CD8-positive, alpha-beta T cell (primary cell): ENCODE measurements at regions of chr3 and their contacts with region 1.

Region 1: DNA sequence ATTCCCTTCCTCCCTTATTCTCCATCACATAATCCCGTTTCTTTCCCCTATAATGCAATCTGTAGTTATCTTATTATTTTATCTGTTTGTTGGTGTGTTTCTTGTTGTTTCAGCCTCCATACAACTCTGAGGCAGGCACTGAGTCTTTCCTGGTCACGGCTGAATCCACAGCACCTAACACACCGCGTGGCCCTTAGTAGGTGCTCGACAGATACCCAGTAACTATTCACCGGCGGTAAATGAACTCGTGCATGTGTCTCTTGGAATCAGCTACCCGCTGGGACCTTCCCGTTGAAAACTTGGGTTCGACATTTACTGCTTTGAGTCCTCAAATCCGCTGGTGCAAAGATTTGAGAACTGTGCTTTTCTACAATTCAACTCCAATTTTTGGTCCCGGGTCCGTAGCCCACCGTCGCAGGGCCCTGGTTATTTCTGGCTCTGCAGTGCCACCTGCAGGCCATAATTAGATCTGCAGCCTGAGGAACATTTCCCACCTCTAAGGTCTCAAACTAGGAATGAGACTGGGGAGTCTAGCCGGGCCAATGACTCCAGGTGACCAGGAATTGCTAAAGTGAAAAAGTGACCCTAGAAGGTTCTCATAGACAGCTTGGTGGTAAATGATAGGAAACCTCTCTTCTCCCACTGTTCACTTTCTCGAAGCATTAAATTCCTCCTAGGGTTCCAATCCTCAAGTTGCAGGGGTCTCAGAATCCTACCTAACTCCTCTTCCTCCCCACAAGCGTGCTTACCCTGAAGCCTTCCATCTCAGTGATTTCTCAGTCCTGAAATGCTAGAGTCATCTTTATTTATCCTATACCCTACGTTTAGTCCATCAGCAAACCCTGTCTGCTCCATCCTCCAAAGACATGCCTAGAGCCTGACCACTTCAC is 40.0 kb upstream of the TRH start:
- DNase-seq: peak in 8 of 9 experiments; percentile 5 to 63 (median 40)
- ATAC-seq: peak; percentile 62
- H3K4me3 ChIP-seq: no peak overlapping the region
- H3K4me3 Mint-ChIP-seq: no peak overlapping the region
- H3K27ac ChIP-seq: no peak overlapping the region
- H3K27ac Mint-ChIP-seq: no peak overlapping the region
- H3K4me1 ChIP-seq: no peaks in the 10 kb centered on the region
- H3K4me1 Mint-ChIP-seq: peaks cover 8% of the 10 kb centered on the region
- H3K27me3 ChIP-seq: no peaks in the 10 kb centered on the region
- H3K27me3 Mint-ChIP-seq: peaks cover 3% of the 10 kb centered on the region
- CTCF ChIP-seq: peak; percentile 85

Region 2: GRCh38 chr3:129383292-129383860 is 551.1 kb before region 1 on chr3:
- CTCF ChIA-PET with region 1: interaction called, 3 read pairs
- POLR2A ChIA-PET with region 1: no interaction called
- intact Hi-C with region 1: loop called in 1 of 2 experiments (anchors 2 kb)
- DNase-seq: peak; percentile 18 to 66 (median 49)
- ATAC-seq: peak; percentile 97
- H3K4me3 ChIP-seq: no peak overlapping the region
- H3K4me3 Mint-ChIP-seq: no peak overlapping the region
- H3K27ac ChIP-seq: no peak overlapping the region
- H3K27ac Mint-ChIP-seq: no peak overlapping the region
- H3K4me1 ChIP-seq: no peaks in the 10 kb centered on the region
- H3K4me1 Mint-ChIP-seq: no peaks in the 10 kb centered on the region
- H3K27me3 ChIP-seq: no peaks in the 10 kb centered on the region
- H3K27me3 Mint-ChIP-seq: no peaks in the 10 kb centered on the region
- CTCF ChIP-seq: peak; percentile 62

Region 3: DNA sequence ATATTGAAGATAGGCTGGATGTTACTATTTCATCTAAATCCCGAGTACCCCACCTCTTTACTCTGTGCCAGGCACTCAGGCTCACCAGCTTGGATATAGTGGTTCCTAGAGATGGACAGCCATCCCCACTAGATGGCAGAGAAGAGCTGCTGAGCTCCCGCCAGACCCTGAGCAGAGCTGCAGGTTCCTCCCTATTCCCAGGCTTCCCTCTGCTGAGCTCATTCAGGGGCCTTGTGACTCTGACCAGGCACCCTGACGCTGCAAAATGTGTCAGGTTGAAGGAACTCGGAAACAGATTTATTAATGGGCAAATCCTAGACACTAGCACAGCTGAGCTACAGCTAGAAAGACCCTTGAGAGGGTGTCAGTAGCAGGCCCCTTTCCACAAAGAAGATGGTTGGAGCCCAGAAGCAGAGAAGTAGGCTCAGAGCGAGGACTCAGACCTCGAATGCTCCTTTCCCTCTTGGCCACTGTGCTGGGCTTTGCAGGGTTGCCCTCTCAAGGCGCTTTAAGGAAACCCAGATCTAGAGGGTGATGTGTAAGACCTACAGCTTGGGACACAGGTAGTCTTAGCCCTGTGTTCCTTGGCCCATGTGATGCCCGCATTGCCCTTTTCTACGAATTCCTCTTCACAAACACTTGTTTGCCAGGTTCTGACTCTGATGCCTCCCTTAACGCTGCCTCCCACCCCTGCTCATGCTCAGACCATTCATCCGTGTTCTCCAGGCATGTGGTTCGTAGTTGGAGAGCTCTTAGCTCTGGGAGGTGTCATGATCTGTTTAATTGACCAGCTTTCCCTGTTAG is 444.0 kb before region 1 on chr3:
- CTCF ChIA-PET with region 1: interaction called, 18 read pairs
- POLR2A ChIA-PET with region 1: no interaction called
- intact Hi-C with region 1: loop called in 1 of 2 experiments (anchors 1 kb)
- DNase-seq: peak; percentile 27 to 79 (median 49)
- ATAC-seq: peak; percentile 97
- H3K4me3 ChIP-seq: no peak overlapping the region
- H3K4me3 Mint-ChIP-seq: no peak overlapping the region
- H3K27ac ChIP-seq: no peak overlapping the region
- H3K27ac Mint-ChIP-seq: no peak overlapping the region
- H3K4me1 ChIP-seq: no peaks in the 10 kb centered on the region
- H3K4me1 Mint-ChIP-seq: peaks cover 2% of the 10 kb centered on the region
- H3K27me3 ChIP-seq: no peaks in the 10 kb centered on the region
- H3K27me3 Mint-ChIP-seq: no peaks in the 10 kb centered on the region
- CTCF ChIP-seq: peak; percentile 72

Region 4: DNA sequence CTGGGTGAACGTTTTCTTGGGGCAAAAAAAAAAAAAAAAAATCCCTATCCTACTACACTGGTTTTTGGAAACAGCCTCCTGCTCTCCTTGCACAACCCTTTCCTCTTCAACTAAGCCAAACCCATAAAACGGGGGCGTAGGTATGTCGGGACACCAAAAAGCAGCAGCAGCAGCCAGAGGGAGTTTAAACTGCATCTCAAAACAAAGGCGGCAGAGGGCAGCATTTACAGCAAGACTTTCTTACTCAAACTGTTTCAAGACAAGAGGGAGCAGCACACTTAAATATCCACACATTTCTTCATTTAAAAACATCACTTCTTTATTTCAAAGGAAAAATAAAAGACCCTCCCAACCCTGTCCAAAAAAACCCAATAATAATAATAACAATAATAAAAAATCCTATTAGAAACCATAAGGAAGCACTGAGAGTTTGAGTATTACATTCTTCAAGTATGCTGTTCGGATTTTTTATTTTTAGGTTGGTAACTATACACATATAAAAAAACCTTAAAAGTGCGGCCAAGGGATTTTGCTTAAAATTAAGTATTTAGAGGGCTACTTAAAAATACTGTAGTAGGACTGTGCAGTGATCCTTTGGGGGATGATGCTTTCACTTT is 284.1 kb before region 1 on chr3:
- CTCF ChIA-PET with region 1: interaction called, 23 read pairs
- POLR2A ChIA-PET with region 1: no interaction called
- intact Hi-C with region 1: loop called (anchors 1 kb)
- DNase-seq: peak; percentile 14 to 68 (median 56)
- ATAC-seq: peak; percentile 46
- H3K4me3 ChIP-seq: no peak overlapping the region
- H3K4me3 Mint-ChIP-seq: no peak overlapping the region
- H3K27ac ChIP-seq: no peak overlapping the region
- H3K27ac Mint-ChIP-seq: no peak overlapping the region
- H3K4me1 ChIP-seq: no peaks in the 10 kb centered on the region
- H3K4me1 Mint-ChIP-seq: peaks cover 2% of the 10 kb centered on the region
- H3K27me3 ChIP-seq: no peaks in the 10 kb centered on the region
- H3K27me3 Mint-ChIP-seq: no peaks in the 10 kb centered on the region
- CTCF ChIP-seq: peak; percentile 65